T-cell (primary cell): ENCODE measurements at regions of chr3 and their contacts with region 1.

Region 1: GRCh38 chr3:57691411-57692163 is 1.3 kb downstream of the DENND6A start:
- DNase-seq: peak in 2 of 35 experiments; percentile 1 to 28
- ATAC-seq: no peak
- H3K4me3 ChIP-seq: peak overlapping the region; percentile 59 to 63
- H3K4me3 Mint-ChIP-seq: peak overlapping the region; percentile 88 to 94 (median 93)
- H3K27ac ChIP-seq: peak overlapping the region; percentile 76
- H3K27ac Mint-ChIP-seq: peak overlapping the region; percentile 91 to 93
- H3K4me1 ChIP-seq: peaks cover 18 to 44% of the 10 kb centered on the region in 2 experiments
- H3K4me1 Mint-ChIP-seq: peaks cover 51 to 54% (median 51%) of the 10 kb centered on the region in 3 donors
- H3K27me3 ChIP-seq: no peaks in the 10 kb centered on the region
- H3K27me3 Mint-ChIP-seq: no peaks in the 10 kb centered on the region

Region 2: DNA sequence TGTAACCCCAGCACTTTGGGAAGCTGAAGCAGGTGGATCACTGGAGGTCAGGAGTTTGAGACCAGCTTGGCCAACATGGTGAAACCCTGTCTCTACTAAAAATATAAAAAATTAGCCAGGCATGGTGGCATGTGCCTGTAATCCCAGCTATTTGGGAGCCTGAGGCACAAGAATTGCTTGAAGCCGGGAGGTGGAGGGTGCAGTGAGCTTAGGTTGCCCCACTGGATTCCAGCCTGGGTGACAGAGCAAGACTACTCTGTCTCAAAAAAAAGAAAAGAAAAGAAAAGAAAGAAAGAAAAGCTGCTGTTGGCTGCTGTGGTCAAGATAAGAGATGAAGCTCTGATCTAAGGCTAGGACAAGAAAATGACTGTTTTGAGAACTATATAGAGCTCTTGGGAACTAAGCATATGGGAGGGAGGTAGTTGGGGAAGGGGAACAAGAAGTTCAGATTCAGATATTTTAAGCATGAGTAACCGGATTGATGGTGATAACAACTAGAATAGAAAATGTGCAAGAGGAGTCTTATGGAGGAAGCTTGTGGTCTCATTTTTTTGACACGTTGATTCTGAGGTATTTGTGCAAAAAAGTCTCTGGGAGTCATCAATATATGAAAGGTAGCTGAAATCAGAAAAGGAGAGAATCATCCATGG is 173.2 kb before region 1 on chr3:
- CTCF ChIA-PET with region 1: no interaction called
- POLR2A ChIA-PET with region 1: no interaction called
- DNase-seq: no peak
- ATAC-seq: no peak
- H3K4me3 ChIP-seq: no peak overlapping the region
- H3K4me3 Mint-ChIP-seq: no peak overlapping the region
- H3K27ac ChIP-seq: no peak overlapping the region
- H3K27ac Mint-ChIP-seq: no peak overlapping the region
- H3K4me1 ChIP-seq: no peaks in the 10 kb centered on the region
- H3K4me1 Mint-ChIP-seq: peaks cover 1 to 9% (median 4%) of the 10 kb centered on the region in 3 donors
- H3K27me3 ChIP-seq: peaks cover 0 to 7% of the 10 kb centered on the region in 2 experiments
- H3K27me3 Mint-ChIP-seq: peaks cover 0 to 8% of the 10 kb centered on the region in 2 donors

Region 3: GRCh38 chr3:57675530-57675929 is 16.1 kb before region 1 on chr3:
- CTCF ChIA-PET with region 1: interaction called, 3 to 5 read pairs
- POLR2A ChIA-PET with region 1: interaction called, 12 to 23 read pairs
- DNase-seq: no peak
- ATAC-seq: no peak
- H3K4me3 ChIP-seq: no peak overlapping the region
- H3K4me3 Mint-ChIP-seq: no peak overlapping the region
- H3K27ac ChIP-seq: no peak overlapping the region
- H3K27ac Mint-ChIP-seq: peak overlapping the region in 1 of 2 donors; percentile 76
- H3K4me1 ChIP-seq: peaks cover 14 to 19% of the 10 kb centered on the region in 2 experiments
- H3K4me1 Mint-ChIP-seq: peaks cover 66 to 68% (median 67%) of the 10 kb centered on the region in 3 donors
- H3K27me3 ChIP-seq: no peaks in the 10 kb centered on the region
- H3K27me3 Mint-ChIP-seq: no peaks in the 10 kb centered on the region